Activated CD4-positive, alpha-beta T cell treated with anti-CD3 and anti-CD28 coated beads, Interleukin-2, amount 10 ng/mL, durations not matched to agents 24 days and 14 days (primary cell): ENCODE measurements at regions of chr1 and their contacts with region 1.

Region 1: DNA sequence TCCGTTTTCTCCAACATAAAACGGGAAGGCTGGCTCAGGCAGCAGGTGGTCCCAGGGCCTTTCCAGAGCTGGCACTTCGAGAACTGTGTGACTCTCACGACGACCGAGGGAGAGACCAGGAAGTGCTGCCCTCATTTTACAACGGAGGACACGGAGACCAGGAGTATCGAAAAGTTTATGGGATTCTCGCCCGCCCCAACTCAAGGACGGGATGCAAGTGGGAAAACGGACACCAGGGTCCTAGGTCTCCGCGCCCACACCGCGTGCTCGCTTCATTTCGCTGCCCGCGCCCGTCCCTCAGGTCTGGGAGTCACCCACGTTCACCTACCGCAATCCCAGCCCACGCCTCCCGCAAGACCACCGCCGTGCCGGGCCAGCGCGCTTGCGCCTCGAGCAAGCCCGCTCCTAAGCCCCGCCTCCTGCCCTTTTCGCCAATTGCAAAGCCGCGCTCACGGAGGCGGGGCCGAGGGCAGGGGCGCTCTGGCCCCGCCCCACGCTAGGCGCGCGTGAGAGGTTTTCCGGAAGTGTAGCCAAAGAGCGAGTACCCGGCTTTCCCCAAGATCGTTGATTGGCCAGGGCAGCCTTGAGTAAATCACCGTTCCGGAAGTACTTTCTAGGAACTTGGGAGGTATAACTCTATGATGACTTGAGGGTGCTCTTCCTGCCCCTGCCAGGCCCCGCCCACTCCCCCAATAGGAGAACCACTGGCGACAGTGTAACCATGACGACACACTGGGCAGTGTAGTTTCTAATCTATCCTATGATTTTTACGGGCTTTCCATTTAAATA is at the start of gene PARS2:
- DNase-seq: peak; percentile 99
- H3K4me3 Mint-ChIP-seq: peak within 1 kb of the TSS; percentile 93
- H3K27ac Mint-ChIP-seq: peak within 1 kb of the TSS; percentile 94
- H3K4me1 Mint-ChIP-seq: peaks cover 11% of the 10 kb centered on the region
- H3K27me3 Mint-ChIP-seq: no peaks in the 10 kb centered on the region
- total RNA-seq, gene PARS2: 7.1 and 7.8 TPM in 2 replicates

Region 2: GRCh38 chr1:53889304-53890298 is 874.7 kb before region 1 on chr1 and contains the start of gene YIPF1:
- intact Hi-C with region 1: loop called (anchors 1 kb)
- DNase-seq: peak; percentile 98
- H3K4me3 Mint-ChIP-seq: peak within 1 kb of the TSS; percentile 98
- H3K27ac Mint-ChIP-seq: peak within 1 kb of the TSS; percentile 90
- H3K4me1 Mint-ChIP-seq: peaks cover 34% of the 10 kb centered on the region
- H3K27me3 Mint-ChIP-seq: no peaks in the 10 kb centered on the region
- total RNA-seq, gene YIPF1: 14.6 and 15.6 TPM in 2 replicates

Region 3: GRCh38 chr1:54800899-54801759 is 36.8 kb after region 1 on chr1 and contains the start of gene TTC22:
- intact Hi-C with region 1: loop called (anchors 1 kb)
- DNase-seq: peak; percentile 91
- H3K4me3 Mint-ChIP-seq: peak within 1 kb of the TSS; percentile 87
- H3K27ac Mint-ChIP-seq: peak within 1 kb of the TSS; percentile 81
- H3K4me1 Mint-ChIP-seq: peaks cover 54% of the 10 kb centered on the region
- H3K27me3 Mint-ChIP-seq: no peaks in the 10 kb centered on the region
- total RNA-seq, gene TTC22: 1.6 TPM in 2 replicates

Region 4: DNA sequence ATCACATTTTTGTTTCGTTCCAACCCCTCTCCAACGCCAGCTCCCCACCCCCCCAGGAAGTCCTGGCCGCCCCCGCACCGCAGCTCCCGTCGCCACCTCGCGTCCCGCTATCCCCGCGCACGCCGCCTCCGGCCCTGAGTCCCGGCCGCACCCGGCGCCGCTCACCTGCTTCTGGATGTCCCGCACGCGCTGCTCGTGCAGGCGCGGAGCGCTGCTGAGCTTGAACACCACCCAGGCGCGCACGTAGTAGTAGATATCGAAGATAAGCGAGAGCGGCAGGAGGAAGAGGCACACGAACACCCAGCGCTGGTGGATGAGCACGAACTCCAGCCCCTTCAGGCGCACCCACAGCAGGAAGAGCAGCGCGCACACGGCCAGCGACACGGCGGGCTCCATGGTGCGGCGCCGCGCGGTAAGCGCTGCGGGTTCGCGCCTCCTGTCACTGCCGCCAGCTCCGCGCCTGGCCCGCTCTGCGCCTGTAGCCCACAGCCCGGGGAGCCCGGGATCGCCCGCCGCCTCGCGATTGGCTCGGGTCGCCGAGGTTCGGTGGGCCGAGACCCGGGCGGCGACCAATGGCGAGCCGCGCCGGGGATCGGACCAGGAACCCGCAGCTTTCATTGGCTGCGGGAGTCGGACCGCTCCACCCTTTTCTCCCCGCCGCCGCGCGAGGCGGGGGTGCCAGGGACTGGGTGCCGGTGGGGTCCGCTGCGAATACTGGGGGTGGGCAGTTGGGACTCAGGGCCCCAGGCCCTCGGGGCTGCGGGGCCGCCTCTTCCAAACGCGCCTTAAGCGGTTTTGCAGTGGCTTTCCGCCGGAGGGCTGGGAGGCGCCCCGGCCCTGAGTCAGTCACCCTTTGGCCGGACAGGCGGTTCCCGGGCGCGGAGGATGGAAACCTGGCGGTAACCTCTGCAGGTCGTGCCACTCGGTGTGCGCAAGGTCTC is 122.7 kb after region 1 on chr1 and contains the start of gene DHCR24:
- intact Hi-C with region 1: loop called (anchors 1 kb)
- DNase-seq: peak; percentile 96
- H3K4me3 Mint-ChIP-seq: peak within 1 kb of the TSS; percentile 99
- H3K27ac Mint-ChIP-seq: peak within 1 kb of the TSS; percentile 96
- H3K4me1 Mint-ChIP-seq: peaks cover 55% of the 10 kb centered on the region
- H3K27me3 Mint-ChIP-seq: peaks cover 9% of the 10 kb centered on the region
- total RNA-seq, gene DHCR24: 207 and 211 TPM in 2 replicates